ENCODE measurements at regions of chr17 and their contacts with region 1.

Region 1: DNA sequence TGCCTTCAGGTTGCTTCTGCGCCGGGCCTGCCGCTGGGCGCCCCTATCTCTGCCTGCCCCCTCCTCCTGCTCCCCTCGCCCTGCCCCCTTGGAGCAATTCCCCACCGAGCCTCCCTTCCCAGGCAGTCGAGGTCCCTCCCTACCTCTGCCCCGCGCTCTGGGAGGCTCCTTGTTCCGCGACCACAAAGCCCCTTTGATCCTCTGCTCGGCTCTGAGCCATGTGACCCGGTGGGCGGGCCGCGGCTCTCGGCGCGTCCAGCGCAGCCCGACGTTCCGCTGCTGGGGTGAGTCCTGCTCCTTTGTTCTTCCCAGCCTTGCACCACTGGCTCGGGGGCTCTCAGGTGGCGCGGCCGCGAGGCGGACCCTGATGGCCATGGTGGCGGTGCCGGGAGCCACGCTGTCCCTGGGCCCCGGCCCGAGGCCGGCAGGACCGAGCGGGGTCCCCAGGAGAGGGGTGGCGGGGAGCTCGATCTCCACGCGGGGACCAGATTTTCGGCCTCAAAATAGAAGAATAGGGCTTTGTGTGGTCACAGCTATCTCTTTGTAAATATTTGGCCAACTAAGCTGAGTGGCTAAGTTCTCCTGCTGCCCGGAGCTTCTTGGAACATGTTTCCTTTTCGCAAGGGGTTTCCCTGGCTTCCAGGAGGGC is 310.6 kb downstream of the SEC14L1 start:
- DNase-seq: no peak
- ATAC-seq: peak; percentile 28 to 60
- H3K4me3 ChIP-seq: peak overlapping the region; percentile 51 to 67 (median 60)
- H3K27ac ChIP-seq: peak overlapping the region; percentile 64 to 76 (median 68)
- H3K4me1 ChIP-seq: peaks cover 44 to 49% of the 10 kb centered on the region in 2 donors
- H3K27me3 ChIP-seq: no peaks in the 10 kb centered on the region
- CTCF ChIP-seq: no peak
- POLR2A ChIP-seq: no peak

Region 2: GRCh38 chr17:77086433-77087010 is 364.8 kb before region 1 on chr17:
- in situ Hi-C with region 1: no loop called
- intact Hi-C with region 1: no loop called
- DNase-seq: peak; percentile 65 to 86
- ATAC-seq: peak; percentile 52 to 70
- H3K4me3 ChIP-seq: peak overlapping the region in 1 of 4 donors; percentile 43
- H3K27ac ChIP-seq: peak overlapping the region in 3 of 4 donors; percentile 11 to 72 (median 62)
- H3K4me1 ChIP-seq: peaks cover 30 to 32% of the 10 kb centered on the region in 2 donors
- H3K27me3 ChIP-seq: no peaks in the 10 kb centered on the region
- CTCF ChIP-seq: peak; percentile 91 to 96 (median 95)
- POLR2A ChIP-seq: no peak

Region 3: DNA sequence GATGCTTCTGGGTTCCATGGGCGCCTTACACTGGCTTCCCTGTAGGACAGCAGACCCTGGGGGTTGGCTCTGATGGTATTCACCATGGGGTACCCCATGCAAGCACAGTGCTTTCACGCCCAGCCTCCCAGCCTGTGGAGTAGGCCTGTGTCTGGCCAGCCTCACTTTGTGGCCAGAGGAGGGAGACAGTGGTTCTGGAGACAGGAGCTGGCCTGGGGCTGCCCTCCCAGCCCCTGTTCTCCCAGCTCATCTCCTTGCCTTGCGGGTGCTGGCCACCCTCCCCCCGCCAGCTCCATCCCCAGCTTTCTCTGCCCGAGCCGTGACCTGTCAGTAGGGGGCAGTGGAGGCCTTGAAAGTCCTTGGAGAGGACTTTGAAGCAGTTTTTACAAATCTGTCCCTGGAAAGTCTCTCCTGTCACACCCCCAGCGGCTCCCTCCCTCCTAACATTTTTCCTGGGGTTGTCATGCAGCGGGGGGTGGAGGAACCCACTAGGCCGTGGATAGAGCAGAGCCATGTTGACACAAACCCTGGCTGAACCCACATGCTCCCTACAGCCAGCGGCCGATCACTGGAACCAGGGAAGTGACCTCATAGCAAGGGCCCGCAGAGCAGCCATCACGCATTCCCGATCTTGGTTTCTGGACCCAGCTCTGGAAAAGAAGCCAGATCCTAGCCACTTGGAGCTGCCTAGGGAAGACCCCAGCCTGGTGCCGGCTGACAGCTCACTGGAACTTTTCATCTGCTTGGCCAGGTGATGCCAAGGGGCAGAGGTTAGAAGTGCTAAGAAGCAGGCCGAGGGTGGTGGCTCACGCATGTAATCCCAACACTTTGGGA is 21.2 kb before region 1 on chr17:
- in situ Hi-C with region 1: no loop called
- intact Hi-C with region 1: loop called (anchors 2 kb)
- DNase-seq: peak; percentile 70 to 87
- ATAC-seq: peak; percentile 55 to 69
- H3K4me3 ChIP-seq: no peak overlapping the region
- H3K27ac ChIP-seq: peak overlapping the region; percentile 56 to 92 (median 76)
- H3K4me1 ChIP-seq: peaks cover 63 to 80% of the 10 kb centered on the region in 2 donors
- H3K27me3 ChIP-seq: no peaks in the 10 kb centered on the region
- CTCF ChIP-seq: peak; percentile 60 to 83 (median 80)
- POLR2A ChIP-seq: no peak

Region 4: GRCh38 chr17:77471984-77472461 is 20.7 kb after region 1 on chr17:
- in situ Hi-C with region 1: no loop called
- intact Hi-C with region 1: loop called (anchors 2 kb)
- DNase-seq: no peak
- ATAC-seq: no peak
- H3K4me3 ChIP-seq: peak overlapping the region in 1 of 4 donors; percentile 17
- H3K27ac ChIP-seq: peak overlapping the region; percentile 51 to 85 (median 64)
- H3K4me1 ChIP-seq: peaks cover 48 to 65% of the 10 kb centered on the region in 2 donors
- H3K27me3 ChIP-seq: no peaks in the 10 kb centered on the region
- CTCF ChIP-seq: no peak
- POLR2A ChIP-seq: no peak

Region 5: GRCh38 chr17:77724876-77725615 is 273.7 kb after region 1 on chr17:
- in situ Hi-C with region 1: no loop called
- intact Hi-C with region 1: no loop called
- DNase-seq: no peak
- ATAC-seq: no peak
- H3K4me3 ChIP-seq: no peak overlapping the region
- H3K27ac ChIP-seq: no peak overlapping the region
- H3K4me1 ChIP-seq: peaks cover 4 to 6% of the 10 kb centered on the region in 2 donors
- H3K27me3 ChIP-seq: no peaks in the 10 kb centered on the region
- CTCF ChIP-seq: no peak
- POLR2A ChIP-seq: no peak

Measured in gastrocnemius medialis (tissue), 4 donors.